Astrocyte of the cerebellum (primary cell): ENCODE measurements at regions of chr1 and their contacts with region 1.

Region 1: GRCh38 chr1:161045750-161046571 is at the start of gene USF1:
- DNase-seq: peak; percentile 91
- H3K4me3 ChIP-seq: peak within 1 kb of the TSS; percentile 90
- CTCF ChIP-seq: no peak

Region 2: GRCh38 chr1:161098210-161099068 is 52.5 kb after region 1 on chr1 and contains the start of gene KLHDC9:
- in situ Hi-C with region 1: loop called (anchors 5 kb)
- DNase-seq: peak; percentile 28
- H3K4me3 ChIP-seq: peak within 1 kb of the TSS; percentile 63
- CTCF ChIP-seq: no peak

Region 3: GRCh38 chr1:161139765-161140164 is 93.8 kb after region 1 on chr1:
- in situ Hi-C with region 1: loop called (anchors 10 kb)
- DNase-seq: peak; percentile 35
- H3K4me3 ChIP-seq: no peak overlapping the region
- CTCF ChIP-seq: peak; percentile 61

Region 4: GRCh38 chr1:161192476-161193465 is 146.8 kb after region 1 on chr1:
- in situ Hi-C with region 1: no loop called
- DNase-seq: peak; percentile 43
- H3K4me3 ChIP-seq: no peak overlapping the region
- CTCF ChIP-seq: peak; percentile 93

Region 5: DNA sequence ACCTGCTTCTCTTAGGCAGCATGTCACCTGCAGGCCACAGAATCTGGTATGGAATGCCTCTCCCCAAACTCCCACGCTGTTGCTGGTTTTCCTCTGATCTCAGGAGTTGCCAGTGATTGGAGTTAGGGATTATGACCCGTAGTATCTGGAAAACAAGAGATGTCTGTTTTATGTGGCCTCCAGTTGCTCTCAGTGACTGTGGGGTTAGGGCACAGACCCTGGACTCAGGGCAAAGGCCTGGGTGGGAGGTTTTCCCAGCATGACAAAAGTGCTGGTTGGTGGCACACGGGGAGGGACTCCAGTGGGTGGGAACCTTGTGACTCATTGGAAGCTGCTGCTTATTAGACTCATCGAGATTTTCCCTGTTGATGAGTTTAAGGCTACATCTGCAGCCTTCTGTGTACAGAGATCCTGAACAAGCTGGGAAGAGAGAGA is 192.1 kb after region 1 on chr1 and contains the start of gene NR1I3:
- in situ Hi-C with region 1: no loop called
- DNase-seq: no peak
- H3K4me3 ChIP-seq: no peak within 1 kb of the TSS
- CTCF ChIP-seq: no peak